ENCODE measurements at regions of chr3 and their contacts with region 1.

Region 1: GRCh38 chr3:120526011-120526870 is 69.9 kb upstream of the NDUFB4 start:
- ATAC-seq: no peak
- H3K4me3 ChIP-seq: no peak overlapping the region
- H3K27ac ChIP-seq: no peak overlapping the region
- H3K4me1 ChIP-seq: no peaks in the 10 kb centered on the region

Region 2: GRCh38 chr3:120274739-120275167 is 251.5 kb before region 1 on chr3:
- in situ Hi-C with region 1: loop called in 2 of 9 experiments (anchors 25 kb)
- ATAC-seq: peak in 2 of 8 experiments; percentile 15 to 84
- H3K4me3 ChIP-seq: no peak overlapping the region
- H3K27ac ChIP-seq: no peak overlapping the region
- H3K4me1 ChIP-seq: peaks cover 6 to 8% of the 10 kb centered on the region in 2 donors

Region 3: GRCh38 chr3:120449701-120450599 is 76.3 kb before region 1 on chr3:
- in situ Hi-C with region 1: loop called in 1 of 9 experiments (anchors 25 kb)
- ATAC-seq: peak; percentile 11 to 55 (median 34)
- H3K4me3 ChIP-seq: peak overlapping the region; percentile 50 to 82 (median 57)
- H3K27ac ChIP-seq: no peak overlapping the region
- H3K4me1 ChIP-seq: peaks cover 21 to 29% of the 10 kb centered on the region in 2 donors